A673 (cell line): ENCODE measurements at regions of chr12 and their contacts with region 1.

Region 1: DNA sequence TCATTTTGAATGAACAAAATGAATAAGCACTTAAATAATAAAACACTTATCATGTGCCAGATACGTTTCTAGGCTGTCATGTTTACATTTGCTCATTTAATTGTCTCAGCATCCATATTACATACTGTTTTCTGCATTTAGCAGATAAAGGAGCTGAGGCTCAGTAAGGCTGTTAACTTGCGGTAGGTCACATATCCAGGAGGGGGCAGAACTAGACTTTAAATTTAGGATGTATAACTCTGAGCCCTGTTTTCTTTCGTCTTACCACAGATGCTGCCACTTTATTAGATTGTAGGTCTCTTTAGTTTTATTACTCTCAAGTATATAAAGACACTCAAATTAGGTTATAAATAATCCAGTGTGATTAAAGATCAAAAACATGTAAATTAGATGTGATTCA is 17.7 kb downstream of the IRAK4 start:
- DNase-seq: peak; percentile 61
- H3K4me3 ChIP-seq: no peak overlapping the region
- H3K27ac ChIP-seq: no peak overlapping the region
- H3K4me1 ChIP-seq: no peaks in the 10 kb centered on the region
- H3K27me3 ChIP-seq: no peaks in the 10 kb centered on the region
- CTCF ChIP-seq: peak; percentile 67

Region 2: GRCh38 chr12:43882578-43883178 is 106.2 kb after region 1 on chr12:
- CTCF ChIA-PET with region 1: interaction called, 11 read pairs
- POLR2A ChIA-PET with region 1: no interaction called
- intact Hi-C with region 1: loop called (anchors 2 kb)
- DNase-seq: peak; percentile 67
- H3K4me3 ChIP-seq: no peak overlapping the region
- H3K27ac ChIP-seq: no peak overlapping the region
- H3K4me1 ChIP-seq: no peaks in the 10 kb centered on the region
- H3K27me3 ChIP-seq: no peaks in the 10 kb centered on the region
- CTCF ChIP-seq: peak; percentile 85

Region 3: GRCh38 chr12:44993161-44993560 is 1216.7 kb after region 1 on chr12:
- CTCF ChIA-PET with region 1: no interaction called
- POLR2A ChIA-PET with region 1: no interaction called
- intact Hi-C with region 1: no loop called
- DNase-seq: peak; percentile 22
- H3K4me3 ChIP-seq: no peak overlapping the region
- H3K27ac ChIP-seq: no peak overlapping the region
- H3K4me1 ChIP-seq: no peaks in the 10 kb centered on the region
- H3K27me3 ChIP-seq: peaks cover 3% of the 10 kb centered on the region
- CTCF ChIP-seq: no peak